CD4-positive, alpha-beta T cell (primary cell): ENCODE measurements at regions of chr1 and their contacts with region 1.

Region 1: DNA sequence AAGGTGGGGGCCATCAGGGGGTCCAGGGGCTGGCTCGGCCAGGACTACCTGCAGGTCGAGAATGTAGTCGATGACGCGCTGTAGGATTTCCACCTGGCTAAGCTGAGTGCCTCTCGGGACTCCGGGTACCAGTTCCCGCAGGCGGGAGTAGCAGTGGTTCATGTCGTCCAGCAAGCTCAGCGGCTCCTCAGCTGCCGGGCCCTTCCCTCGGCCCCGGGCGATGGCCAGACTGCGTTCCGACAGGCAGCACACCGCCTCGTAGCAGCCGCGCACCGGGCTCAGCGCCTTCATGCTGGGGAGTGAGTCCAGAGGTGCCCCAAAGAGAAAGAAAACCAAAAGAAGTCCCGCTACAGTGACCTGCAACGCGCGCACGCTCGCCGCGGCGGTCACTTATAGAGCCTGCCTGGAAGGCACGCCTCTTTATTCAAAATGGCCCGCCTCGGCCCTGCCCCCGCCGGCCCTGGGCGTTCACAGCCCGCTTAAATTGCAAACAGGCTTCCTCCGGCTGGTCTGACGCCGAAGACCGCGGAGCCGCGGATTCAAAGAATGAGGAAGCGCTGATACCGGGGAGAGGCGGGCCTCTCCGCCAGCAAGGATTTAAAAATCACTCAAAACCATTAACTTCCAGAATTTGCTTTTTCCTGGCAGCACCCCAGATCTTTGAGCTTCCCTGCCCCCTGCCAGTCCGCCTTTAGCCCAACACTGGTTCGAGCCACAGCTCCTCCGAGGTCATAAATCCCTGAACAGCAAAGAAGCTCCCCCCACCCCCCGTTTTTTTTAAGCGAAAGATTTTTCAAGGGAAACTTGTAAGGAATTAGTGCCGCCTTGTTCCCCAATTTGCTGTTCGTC is at the start of gene ID3:
- DNase-seq: peak; percentile 81 to 96 (median 92)
- ATAC-seq: peak; percentile 50
- H3K4me3 ChIP-seq: peak within 1 kb of the TSS; percentile 87
- H3K4me3 Mint-ChIP-seq: peak within 1 kb of the TSS; percentile 90
- H3K27ac ChIP-seq: peak within 1 kb of the TSS; percentile 61 to 86
- H3K27ac Mint-ChIP-seq: peak within 1 kb of the TSS; percentile 96
- H3K4me1 ChIP-seq: peaks cover 71% of the 10 kb centered on the region
- H3K4me1 Mint-ChIP-seq: peaks cover 79% of the 10 kb centered on the region
- H3K27me3 ChIP-seq: no peaks in the 10 kb centered on the region
- H3K27me3 Mint-ChIP-seq: no peaks in the 10 kb centered on the region
- CTCF ChIP-seq: no peak
- total RNA-seq, gene ID3: 89.8 to 90.4 TPM

Region 2: GRCh38 chr1:23530747-23531561 is 28.4 kb before region 1 on chr1 and contains the start of gene E2F2:
- CTCF ChIA-PET with region 1: interaction called, 4 read pairs
- POLR2A ChIA-PET with region 1: interaction called, 14 read pairs
- intact Hi-C with region 1: no loop called
- DNase-seq: peak; percentile 66 to 92 (median 80)
- ATAC-seq: peak; percentile 79
- H3K4me3 ChIP-seq: peak within 1 kb of the TSS; percentile 44
- H3K4me3 Mint-ChIP-seq: peak within 1 kb of the TSS; percentile 91
- H3K27ac ChIP-seq: peak within 1 kb of the TSS in 1 of 2 donors; percentile 58
- H3K27ac Mint-ChIP-seq: peak within 1 kb of the TSS; percentile 84
- H3K4me1 ChIP-seq: peaks cover 78% of the 10 kb centered on the region
- H3K4me1 Mint-ChIP-seq: peaks cover 80% of the 10 kb centered on the region
- H3K27me3 ChIP-seq: no peaks in the 10 kb centered on the region
- H3K27me3 Mint-ChIP-seq: no peaks in the 10 kb centered on the region
- CTCF ChIP-seq: no peak
- total RNA-seq, gene E2F2: 0.50 to 0.69 TPM

Region 3: DNA sequence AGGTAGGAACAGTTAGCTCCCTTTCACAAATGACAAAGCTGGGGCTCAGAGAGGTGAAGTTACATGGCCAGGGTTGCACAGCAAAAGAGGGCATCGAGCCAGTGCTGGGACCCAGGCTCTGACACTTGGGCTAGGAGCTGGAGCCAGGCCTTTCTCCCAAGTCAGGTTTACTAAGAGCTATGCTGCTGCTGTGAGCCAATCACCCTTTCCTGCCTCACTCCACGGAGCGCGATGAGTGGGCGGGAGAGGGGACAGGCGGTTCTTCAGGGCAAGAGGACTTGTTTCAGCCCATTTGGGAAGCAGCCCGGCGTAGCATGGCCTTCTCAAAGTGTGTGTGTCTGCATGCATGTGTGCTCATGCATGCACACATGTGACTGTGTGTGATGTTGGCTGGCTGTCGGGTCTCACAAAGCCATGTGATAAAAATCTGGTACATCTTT is 10.6 kb before region 1 on chr1:
- CTCF ChIA-PET with region 1: interaction called, 21 read pairs
- POLR2A ChIA-PET with region 1: interaction called, 19 read pairs
- intact Hi-C with region 1: no loop called
- DNase-seq: no peak
- ATAC-seq: no peak
- H3K4me3 ChIP-seq: no peak overlapping the region
- H3K4me3 Mint-ChIP-seq: no peak overlapping the region
- H3K27ac ChIP-seq: no peak overlapping the region
- H3K27ac Mint-ChIP-seq: no peak overlapping the region
- H3K4me1 ChIP-seq: peaks cover 35% of the 10 kb centered on the region
- H3K4me1 Mint-ChIP-seq: peaks cover 41% of the 10 kb centered on the region
- H3K27me3 ChIP-seq: no peaks in the 10 kb centered on the region
- H3K27me3 Mint-ChIP-seq: no peaks in the 10 kb centered on the region
- CTCF ChIP-seq: no peak

Region 4: GRCh38 chr1:23591460-23592208 is 32.3 kb after region 1 on chr1:
- CTCF ChIA-PET with region 1: interaction called, 4 read pairs
- POLR2A ChIA-PET with region 1: interaction called, 180 read pairs
- intact Hi-C with region 1: loop called in 1 of 2 experiments (anchors 2 kb)
- DNase-seq: peak in 3 of 14 experiments; percentile 24 to 63 (median 53)
- ATAC-seq: peak; percentile 23
- H3K4me3 ChIP-seq: no peak overlapping the region
- H3K4me3 Mint-ChIP-seq: peak overlapping the region; percentile 44
- H3K27ac ChIP-seq: peak overlapping the region in 1 of 2 donors; percentile 28
- H3K27ac Mint-ChIP-seq: peak overlapping the region; percentile 78
- H3K4me1 ChIP-seq: peaks cover 63% of the 10 kb centered on the region
- H3K4me1 Mint-ChIP-seq: peaks cover 65% of the 10 kb centered on the region
- H3K27me3 ChIP-seq: no peaks in the 10 kb centered on the region
- H3K27me3 Mint-ChIP-seq: no peaks in the 10 kb centered on the region
- CTCF ChIP-seq: no peak

Region 5: DNA sequence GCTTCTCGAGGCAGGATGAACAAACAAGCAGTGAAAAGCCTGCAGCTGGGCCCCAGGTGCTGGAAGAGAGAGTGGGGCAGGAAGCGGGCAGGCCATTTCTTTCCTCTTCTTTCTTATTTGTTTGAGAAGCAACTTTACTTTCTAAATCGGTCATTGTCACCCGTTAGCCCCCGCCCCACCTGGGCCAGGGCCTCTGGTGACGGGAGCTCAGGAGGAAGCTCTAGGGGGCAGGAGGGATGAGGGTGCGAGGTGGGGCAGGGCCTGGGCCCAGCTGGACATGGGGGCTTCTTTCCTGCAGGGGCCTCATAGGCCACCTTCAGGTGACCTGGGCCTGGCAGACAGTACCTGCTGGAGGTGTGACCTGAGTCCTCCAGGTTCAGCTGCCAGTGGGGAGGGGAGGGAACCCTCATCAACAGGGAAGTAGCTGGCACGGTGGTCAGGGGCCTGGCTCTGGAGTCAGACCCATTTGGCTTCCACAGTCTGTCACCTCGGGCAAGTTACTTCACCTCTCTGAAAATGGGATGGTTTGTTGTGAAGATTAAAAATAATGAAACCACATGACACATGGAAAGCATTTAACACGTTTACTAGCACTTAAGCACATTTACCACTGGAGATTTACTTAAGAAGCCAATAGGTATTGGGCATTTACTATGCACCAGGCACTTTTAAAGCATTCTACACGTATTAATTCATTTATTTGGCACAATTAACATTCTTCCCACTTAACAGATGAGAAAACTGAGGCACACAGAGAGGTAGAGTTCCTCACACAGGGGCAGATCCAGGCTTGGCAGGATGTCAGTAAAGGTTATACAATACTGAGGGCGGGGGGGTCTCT is 54.1 kb after region 1 on chr1:
- CTCF ChIA-PET with region 1: interaction called, 17 read pairs
- POLR2A ChIA-PET with region 1: interaction called, 267 read pairs
- intact Hi-C with region 1: loop called in 1 of 2 experiments (anchors 2 kb)
- DNase-seq: peak in 13 of 14 experiments; percentile 27 to 85 (median 60)
- ATAC-seq: peak; percentile 54
- H3K4me3 ChIP-seq: no peak overlapping the region
- H3K4me3 Mint-ChIP-seq: peak overlapping the region; percentile 51
- H3K27ac ChIP-seq: peak overlapping the region; percentile 71 to 72
- H3K27ac Mint-ChIP-seq: peak overlapping the region; percentile 97
- H3K4me1 ChIP-seq: peaks cover 73% of the 10 kb centered on the region
- H3K4me1 Mint-ChIP-seq: peaks cover 84% of the 10 kb centered on the region
- H3K27me3 ChIP-seq: no peaks in the 10 kb centered on the region
- H3K27me3 Mint-ChIP-seq: no peaks in the 10 kb centered on the region
- CTCF ChIP-seq: no peak

Region 6: GRCh38 chr1:23627069-23627735 is 67.8 kb after region 1 on chr1:
- CTCF ChIA-PET with region 1: interaction called, 81 read pairs
- POLR2A ChIA-PET with region 1: interaction called, 314 read pairs
- intact Hi-C with region 1: loop called in 1 of 2 experiments (anchors 2 kb)
- DNase-seq: peak in 6 of 14 experiments; percentile 30 to 69 (median 62)
- ATAC-seq: peak; percentile 76
- H3K4me3 ChIP-seq: peak overlapping the region; percentile 72
- H3K4me3 Mint-ChIP-seq: peak overlapping the region; percentile 93
- H3K27ac ChIP-seq: peak overlapping the region; percentile 55 to 73
- H3K27ac Mint-ChIP-seq: peak overlapping the region; percentile 94
- H3K4me1 ChIP-seq: peaks cover 57% of the 10 kb centered on the region
- H3K4me1 Mint-ChIP-seq: peaks cover 66% of the 10 kb centered on the region
- H3K27me3 ChIP-seq: no peaks in the 10 kb centered on the region
- H3K27me3 Mint-ChIP-seq: no peaks in the 10 kb centered on the region
- CTCF ChIP-seq: no peak

Region 7: GRCh38 chr1:23979878-23980724 is 420.7 kb after region 1 on chr1 and contains the start of gene SRSF10:
- CTCF ChIA-PET with region 1: no interaction called
- POLR2A ChIA-PET with region 1: no interaction called
- intact Hi-C with region 1: loop called in 1 of 2 experiments (anchors 10 kb)
- DNase-seq: peak; percentile 93 to 100 (median 98)
- ATAC-seq: peak; percentile 95
- H3K4me3 ChIP-seq: peak within 1 kb of the TSS; percentile 92
- H3K4me3 Mint-ChIP-seq: peak within 1 kb of the TSS; percentile 99
- H3K27ac ChIP-seq: peak within 1 kb of the TSS; percentile 97 to 98
- H3K27ac Mint-ChIP-seq: peak within 1 kb of the TSS; percentile 95
- H3K4me1 ChIP-seq: peaks cover 19% of the 10 kb centered on the region
- H3K4me1 Mint-ChIP-seq: peaks cover 54% of the 10 kb centered on the region
- H3K27me3 ChIP-seq: no peaks in the 10 kb centered on the region
- H3K27me3 Mint-ChIP-seq: no peaks in the 10 kb centered on the region
- CTCF ChIP-seq: no peak
- total RNA-seq, gene SRSF10: 346 to 356 TPM